ENCODE measurements at regions of chr4 and their contacts with region 1.

Region 1: DNA sequence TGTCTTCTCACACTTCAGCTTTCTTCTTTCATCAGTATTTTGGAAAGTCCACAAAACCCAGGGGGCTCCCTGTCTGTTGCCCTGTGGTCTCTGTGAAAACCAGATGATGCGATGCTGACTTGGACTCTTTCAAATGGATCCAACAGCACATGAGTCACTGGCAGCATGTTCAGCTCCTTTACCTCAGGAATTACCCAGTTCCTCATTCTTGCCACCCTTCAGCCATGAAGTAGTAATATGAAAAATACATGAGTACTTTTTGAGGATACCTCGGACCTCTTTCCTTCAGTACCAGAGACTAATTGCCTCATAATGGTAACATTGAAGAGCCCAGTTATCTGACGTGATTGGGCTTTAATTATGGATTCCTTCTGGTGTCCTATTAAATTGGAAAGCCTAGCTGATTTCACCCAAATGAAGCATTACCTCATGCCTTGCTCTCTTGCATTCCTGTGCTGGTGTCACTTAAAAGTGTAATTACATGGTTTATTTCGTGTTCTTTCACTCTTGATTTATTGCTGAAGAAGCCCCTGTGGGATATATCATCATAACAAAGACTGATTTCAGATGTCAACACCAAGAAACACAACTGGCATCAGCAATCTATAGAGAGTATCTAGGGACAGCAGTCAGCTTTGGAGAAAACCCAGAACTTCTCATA is 63.4 kb downstream of the NFKB1 start:
- DNase-seq: peak; percentile 51
- H3K4me3 Mint-ChIP-seq: no peak overlapping the region
- H3K27ac Mint-ChIP-seq: peak overlapping the region; percentile 40
- H3K4me1 Mint-ChIP-seq: peaks cover 82% of the 10 kb centered on the region
- H3K27me3 Mint-ChIP-seq: no peaks in the 10 kb centered on the region

Region 2: DNA sequence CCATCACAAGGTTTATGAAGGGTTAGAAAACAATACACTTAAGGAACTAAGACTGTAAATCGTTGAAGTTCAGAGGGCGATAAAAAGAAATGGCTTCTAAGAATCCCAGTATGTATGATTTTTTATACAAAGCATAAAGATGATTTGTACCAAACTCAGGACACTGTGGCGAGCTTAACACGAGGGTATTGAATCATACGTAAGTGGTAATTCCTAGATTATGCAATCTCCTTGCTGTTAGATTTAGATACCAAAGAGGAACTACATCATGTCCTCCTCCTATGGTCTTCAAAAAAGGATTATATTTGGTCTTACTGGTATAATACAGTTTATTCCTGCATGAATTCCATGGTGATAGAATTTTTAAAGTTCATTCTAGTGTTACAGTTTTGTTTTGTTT is 39.4 kb before region 1 on chr4:
- CTCF ChIA-PET with region 1: interaction called, 3 read pairs
- POLR2A ChIA-PET with region 1: interaction called, 7 read pairs
- intact Hi-C with region 1: loop called (anchors 1 kb)
- DNase-seq: no peak
- H3K4me3 Mint-ChIP-seq: no peak overlapping the region
- H3K27ac Mint-ChIP-seq: peak overlapping the region; percentile 73
- H3K4me1 Mint-ChIP-seq: peaks cover 88% of the 10 kb centered on the region
- H3K27me3 Mint-ChIP-seq: no peaks in the 10 kb centered on the region

Region 3: GRCh38 chr4:102554482-102554881 is 10.0 kb before region 1 on chr4:
- CTCF ChIA-PET with region 1: no interaction called
- POLR2A ChIA-PET with region 1: no interaction called
- intact Hi-C with region 1: loop called (anchors 1 kb)
- DNase-seq: no peak
- H3K4me3 Mint-ChIP-seq: no peak overlapping the region
- H3K27ac Mint-ChIP-seq: no peak overlapping the region
- H3K4me1 Mint-ChIP-seq: peaks cover 64% of the 10 kb centered on the region
- H3K27me3 Mint-ChIP-seq: no peaks in the 10 kb centered on the region

Region 4: DNA sequence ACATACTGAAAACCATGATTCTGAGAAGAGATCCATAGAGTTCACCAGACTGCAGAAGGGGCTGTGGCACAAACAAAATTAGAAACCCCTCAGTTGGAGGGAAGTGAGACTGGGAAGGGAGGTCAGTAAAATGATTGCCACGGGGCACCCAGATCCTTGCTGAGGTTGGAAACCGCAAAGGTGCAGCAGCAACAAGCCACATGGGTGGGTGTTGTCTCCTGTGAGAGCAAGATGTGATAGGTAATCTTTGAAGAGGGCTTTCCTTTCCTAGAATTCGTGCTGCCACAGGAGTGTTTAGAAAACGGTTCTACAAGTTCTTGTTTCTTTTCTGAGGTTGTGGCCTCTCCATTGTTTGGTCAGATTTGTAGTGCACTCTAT is 22.1 kb after region 1 on chr4:
- CTCF ChIA-PET with region 1: interaction called, 4 read pairs
- POLR2A ChIA-PET with region 1: interaction called, 10 read pairs
- intact Hi-C with region 1: loop called (anchors 2 kb)
- DNase-seq: peak; percentile 60
- H3K4me3 Mint-ChIP-seq: no peak overlapping the region
- H3K27ac Mint-ChIP-seq: peak overlapping the region; percentile 83
- H3K4me1 Mint-ChIP-seq: peaks cover 84% of the 10 kb centered on the region
- H3K27me3 Mint-ChIP-seq: no peaks in the 10 kb centered on the region

Region 5: DNA sequence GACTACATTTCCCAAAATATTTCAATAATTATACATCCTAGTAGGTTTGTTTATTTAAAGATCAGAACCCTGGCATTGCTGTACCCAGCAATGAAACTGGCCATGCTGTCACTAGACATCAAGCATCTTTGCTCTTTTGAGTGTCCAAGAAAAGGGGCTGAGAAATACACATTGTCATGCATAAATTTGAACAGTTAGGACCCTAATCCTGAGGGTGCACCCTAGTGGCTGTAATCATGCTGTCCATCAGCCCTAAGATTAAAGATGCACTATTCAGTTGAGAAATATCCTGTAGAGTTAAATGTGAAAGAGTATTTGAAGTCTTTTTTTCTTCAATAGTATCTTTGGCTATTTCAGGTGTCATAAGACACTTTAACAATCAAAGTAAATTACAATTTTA is 45.5 kb after region 1 on chr4:
- CTCF ChIA-PET with region 1: no interaction called
- POLR2A ChIA-PET with region 1: no interaction called
- intact Hi-C with region 1: loop called (anchors 2 kb)
- DNase-seq: no peak
- H3K4me3 Mint-ChIP-seq: no peak overlapping the region
- H3K27ac Mint-ChIP-seq: peak overlapping the region; percentile 31
- H3K4me1 Mint-ChIP-seq: peaks cover 86% of the 10 kb centered on the region
- H3K27me3 Mint-ChIP-seq: no peaks in the 10 kb centered on the region

Region 6: GRCh38 chr4:103046416-103047290 is 482.1 kb after region 1 on chr4:
- CTCF ChIA-PET with region 1: no interaction called
- POLR2A ChIA-PET with region 1: no interaction called
- intact Hi-C with region 1: no loop called
- DNase-seq: peak; percentile 40
- H3K4me3 Mint-ChIP-seq: no peak overlapping the region
- H3K27ac Mint-ChIP-seq: no peak overlapping the region
- H3K4me1 Mint-ChIP-seq: peaks cover 10% of the 10 kb centered on the region
- H3K27me3 Mint-ChIP-seq: no peaks in the 10 kb centered on the region